Lower leg skin (tissue), 4 donors: ENCODE measurements at regions of chr12 and their contacts with region 1.

Region 1: GRCh38 chr12:67681105-67681778 is 32.7 kb downstream of the DYRK2 start:
- DNase-seq: peak in 1 of 2 donors; percentile 36
- H3K4me3 ChIP-seq: no peak overlapping the region
- CTCF ChIP-seq: no peak
- POLR2A ChIP-seq: no peak

Region 2: GRCh38 chr12:67943226-67943892 is 262.1 kb after region 1 on chr12:
- intact Hi-C with region 1: loop called (anchors 10 kb)
- DNase-seq: peak in 1 of 2 donors; percentile 83
- H3K4me3 ChIP-seq: no peak overlapping the region
- CTCF ChIP-seq: no peak
- POLR2A ChIP-seq: no peak